Activated B cell treated with CpG ODN at 0.5 μM for 24 hours (primary cell): ENCODE measurements at regions of chr1 and their contacts with region 1.

Region 1: DNA sequence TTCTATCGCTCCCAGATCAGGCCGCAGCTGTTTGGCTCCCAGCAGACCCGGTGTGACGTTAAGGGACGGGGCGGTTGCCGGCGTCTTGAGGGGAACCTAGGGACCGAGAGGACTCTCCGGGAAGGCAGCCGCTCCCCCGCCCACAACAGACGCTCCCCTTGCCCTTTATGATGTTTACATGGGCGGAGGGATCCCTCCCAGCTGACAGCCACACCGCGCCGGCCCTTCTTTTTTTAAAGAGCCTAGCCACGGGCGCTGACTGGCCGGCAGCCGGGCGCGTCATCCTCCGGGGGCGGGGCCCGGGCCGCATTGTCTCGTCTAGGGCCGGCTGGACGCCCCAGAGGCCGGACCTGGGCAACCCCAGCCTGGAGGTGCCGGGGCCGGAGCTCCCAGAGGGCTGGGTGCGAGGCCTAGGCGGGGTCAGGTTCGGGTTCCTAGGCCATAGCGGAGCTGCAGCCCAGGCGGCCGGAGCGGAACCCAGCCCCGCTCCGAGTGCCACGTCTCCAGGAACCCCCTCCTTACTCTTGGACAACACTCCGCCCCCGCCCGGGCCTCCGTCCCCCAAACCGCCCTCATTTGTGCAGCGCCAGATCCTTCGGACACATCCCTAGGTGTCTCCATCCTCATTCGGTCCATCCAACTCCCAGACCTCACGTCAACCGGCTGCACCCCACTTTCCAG is at the start of gene PCAT6:
- DNase-seq: peak; percentile 88
- ATAC-seq: peak; percentile 82
- H3K4me3 Mint-ChIP-seq: peak within 1 kb of the TSS; percentile 93
- H3K27ac Mint-ChIP-seq: peak within 1 kb of the TSS; percentile 80
- H3K4me1 Mint-ChIP-seq: peaks cover 36% of the 10 kb centered on the region
- H3K27me3 Mint-ChIP-seq: no peaks in the 10 kb centered on the region
- CTCF ChIP-seq: no peak
- total RNA-seq, gene PCAT6: 0.67 and 0.83 TPM in 2 replicates

Region 2: GRCh38 chr1:202861420-202862200 is 50.9 kb after region 1 on chr1:
- CTCF ChIA-PET with region 1: no interaction called
- POLR2A ChIA-PET with region 1: no interaction called
- intact Hi-C with region 1: loop called (anchors 2 kb)
- DNase-seq: peak; percentile 50
- ATAC-seq: peak; percentile 96
- H3K4me3 Mint-ChIP-seq: peak overlapping the region; percentile 89
- H3K27ac Mint-ChIP-seq: peak overlapping the region; percentile 3
- H3K4me1 Mint-ChIP-seq: peaks cover 13% of the 10 kb centered on the region
- H3K27me3 Mint-ChIP-seq: peaks cover 14% of the 10 kb centered on the region
- CTCF ChIP-seq: no peak